CD14-positive monocyte (primary cell): ENCODE measurements at regions of chr15 and their contacts with region 1.

Region 1: DNA sequence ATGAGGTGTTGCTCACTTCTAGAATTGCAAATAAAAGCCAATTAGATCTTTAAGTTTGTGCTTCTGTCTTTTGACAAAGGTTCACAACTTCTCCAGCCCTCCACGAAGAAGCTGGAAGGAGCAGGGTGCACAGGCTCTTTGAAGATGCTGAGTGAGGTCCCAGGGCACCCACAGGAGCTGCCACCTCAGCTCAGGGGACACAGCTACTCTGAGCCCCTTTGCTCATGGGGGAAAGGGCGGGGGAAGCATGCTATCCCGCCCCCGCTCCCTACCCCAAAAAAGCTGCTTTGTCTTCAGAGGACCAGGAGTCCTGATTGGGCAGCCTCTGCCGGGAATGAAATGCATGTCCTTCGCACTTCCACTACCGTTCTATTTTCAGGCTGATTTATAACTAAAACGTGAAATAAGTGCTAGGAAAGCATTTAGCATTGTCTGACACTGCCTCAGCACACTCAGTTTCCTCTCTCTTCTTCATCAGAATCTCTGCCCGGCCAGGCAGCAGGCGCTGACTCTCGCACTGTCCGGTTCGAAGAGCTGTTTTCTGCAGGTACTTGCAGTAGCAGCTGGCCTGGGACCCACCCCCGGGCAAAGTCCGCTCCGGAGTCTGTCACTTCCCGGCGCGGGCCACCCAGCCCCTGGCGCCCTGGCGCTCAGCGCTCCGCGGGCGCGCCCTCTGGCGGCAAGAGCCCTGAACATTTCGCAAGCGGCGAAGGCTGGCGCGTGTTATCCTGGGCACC is 45.5 kb upstream of the KLHL25 start:
- DNase-seq: peak; percentile 65 to 75 (median 74)
- H3K4me3 ChIP-seq: peak overlapping the region; percentile 5 to 66 (median 8)
- H3K4me3 Mint-ChIP-seq: peak overlapping the region; percentile 75 to 85
- H3K27ac ChIP-seq: no peak overlapping the region
- H3K27ac Mint-ChIP-seq: peak overlapping the region in 5 of 7 donors; percentile 26 to 89 (median 50)
- H3K4me1 ChIP-seq: peaks cover 12 to 13% of the 10 kb centered on the region in 2 donors
- H3K4me1 Mint-ChIP-seq: peaks cover 13% of the 10 kb centered on the region
- H3K27me3 ChIP-seq: no peaks in the 10 kb centered on the region
- H3K27me3 Mint-ChIP-seq: peaks cover 5 to 16% (median 12%) of the 10 kb centered on the region in 3 donors
- CTCF ChIP-seq: peak; percentile 91

Region 2: GRCh38 chr15:85329561-85330422 is 510.4 kb before region 1 on chr15:
- intact Hi-C with region 1: no loop called
- DNase-seq: peak; percentile 49 to 54 (median 51)
- H3K4me3 ChIP-seq: peak overlapping the region; percentile 60 to 99 (median 84)
- H3K4me3 Mint-ChIP-seq: peak overlapping the region; percentile 95 to 100
- H3K27ac ChIP-seq: peak overlapping the region; percentile 83 to 85
- H3K27ac Mint-ChIP-seq: peak overlapping the region; percentile 86 to 95 (median 91)
- H3K4me1 ChIP-seq: peaks cover 24 to 28% of the 10 kb centered on the region in 2 donors
- H3K4me1 Mint-ChIP-seq: peaks cover 28% of the 10 kb centered on the region
- H3K27me3 ChIP-seq: no peaks in the 10 kb centered on the region
- H3K27me3 Mint-ChIP-seq: no peaks in the 10 kb centered on the region
- CTCF ChIP-seq: no peak

Region 3: DNA sequence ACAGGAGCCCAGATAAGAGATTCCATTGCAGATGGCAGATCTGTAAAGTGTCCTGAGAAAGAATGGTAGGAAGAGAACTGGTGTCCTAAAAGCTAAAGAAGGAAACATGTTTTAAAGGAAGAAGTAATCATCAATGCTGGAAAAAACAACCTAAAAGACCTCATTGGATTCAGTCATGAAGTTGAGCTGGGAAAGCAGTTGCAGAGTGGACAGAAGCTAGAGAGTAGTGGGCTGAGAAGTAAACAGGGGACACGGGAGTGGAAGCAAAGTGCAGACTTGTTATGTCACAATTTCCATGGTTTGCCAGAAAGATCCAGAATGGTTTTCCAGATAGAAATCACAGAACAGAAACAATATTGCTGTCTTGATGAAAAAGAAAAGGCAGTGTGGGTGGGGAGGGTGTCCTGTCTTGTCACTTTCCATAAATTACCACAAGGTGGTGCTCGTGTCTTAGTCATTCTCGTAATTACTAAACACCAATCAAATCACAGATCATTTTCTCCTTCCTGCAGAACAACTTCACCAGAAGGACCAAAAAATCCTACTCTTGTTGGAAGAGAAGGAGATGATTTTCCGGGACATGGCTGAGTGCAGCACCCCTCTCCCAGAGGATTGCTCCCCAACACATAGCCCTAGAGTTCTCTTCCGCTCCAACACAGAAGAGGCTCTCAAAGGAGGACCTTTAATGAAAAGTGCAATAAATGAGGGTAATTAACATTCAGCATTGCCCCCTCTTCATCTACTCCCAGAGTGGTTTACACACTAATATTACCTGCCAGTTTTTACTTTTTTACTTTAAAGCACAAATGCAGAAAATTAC is 110.0 kb before region 1 on chr15:
- intact Hi-C with region 1: loop called (anchors 2 to 5 kb)
- DNase-seq: peak; percentile 27 to 50 (median 39)
- H3K4me3 ChIP-seq: no peak overlapping the region
- H3K4me3 Mint-ChIP-seq: no peak overlapping the region
- H3K27ac ChIP-seq: no peak overlapping the region
- H3K27ac Mint-ChIP-seq: peak overlapping the region in 6 of 7 donors; percentile 42 to 80 (median 60)
- H3K4me1 ChIP-seq: no peaks in the 10 kb centered on the region
- H3K4me1 Mint-ChIP-seq: no peaks in the 10 kb centered on the region
- H3K27me3 ChIP-seq: no peaks in the 10 kb centered on the region
- H3K27me3 Mint-ChIP-seq: no peaks in the 10 kb centered on the region
- CTCF ChIP-seq: peak; percentile 75

Region 4: GRCh38 chr15:85899927-85900326 is 59.7 kb after region 1 on chr15:
- intact Hi-C with region 1: no loop called
- DNase-seq: no peak
- H3K4me3 ChIP-seq: no peak overlapping the region
- H3K4me3 Mint-ChIP-seq: no peak overlapping the region
- H3K27ac ChIP-seq: no peak overlapping the region
- H3K27ac Mint-ChIP-seq: no peak overlapping the region
- H3K4me1 ChIP-seq: no peaks in the 10 kb centered on the region
- H3K4me1 Mint-ChIP-seq: no peaks in the 10 kb centered on the region
- H3K27me3 ChIP-seq: no peaks in the 10 kb centered on the region
- H3K27me3 Mint-ChIP-seq: peaks cover 7 to 13% (median 10%) of the 10 kb centered on the region in 3 donors
- CTCF ChIP-seq: no peak